Ascending aorta (tissue), 2 donors: ENCODE measurements at regions of chr18 and their contacts with region 1.

Region 1: GRCh38 chr18:63320046-63320689 is 599 bp upstream of the BCL2 start:
- DNase-seq: peak; percentile 66 to 94
- H3K4me3 ChIP-seq: peak overlapping the region; percentile 56 to 68
- H3K27ac ChIP-seq: peak overlapping the region; percentile 87 to 95
- H3K4me1 ChIP-seq: peaks cover 3 to 6% of the 10 kb centered on the region in 2 donors
- H3K27me3 ChIP-seq: no peaks in the 10 kb centered on the region
- CTCF ChIP-seq: peak in 1 of 3 experiments; percentile 31

Region 2: DNA sequence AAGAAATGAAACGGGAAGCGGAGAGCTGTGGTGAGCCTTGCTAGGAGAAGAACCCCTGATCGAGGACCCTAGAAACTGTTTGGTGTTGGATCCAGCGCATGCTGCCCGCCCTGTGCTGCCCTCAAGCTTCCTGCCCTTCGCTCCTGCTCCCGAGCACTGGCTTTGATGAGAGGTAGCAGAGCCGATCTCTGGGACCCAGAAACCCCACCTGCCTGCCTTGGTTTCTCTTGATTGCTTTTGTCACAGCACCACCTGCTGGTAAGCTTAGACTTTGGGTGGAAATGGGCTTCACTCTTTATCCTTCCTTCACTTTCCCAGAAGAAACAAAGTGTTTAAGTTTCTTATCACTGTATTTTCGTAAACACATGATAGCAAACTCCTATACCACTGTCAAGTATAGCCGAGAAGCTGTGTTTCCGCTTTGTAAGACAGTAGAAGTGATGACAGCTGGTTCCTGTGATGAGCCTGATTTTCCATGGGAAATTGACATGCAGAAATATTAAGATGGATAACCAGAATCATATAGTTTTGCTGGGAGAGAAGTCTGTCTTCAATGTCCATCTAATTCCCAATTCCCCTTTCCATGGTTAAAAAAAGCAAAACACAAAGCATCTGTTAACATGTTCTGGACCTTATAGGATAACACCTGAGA is 337.4 kb before region 1 on chr18:
- intact Hi-C with region 1: no loop called
- DNase-seq: no peak
- H3K4me3 ChIP-seq: peak overlapping the region in 1 of 2 donors; percentile 57
- H3K27ac ChIP-seq: no peak overlapping the region
- H3K4me1 ChIP-seq: no peaks in the 10 kb centered on the region
- H3K27me3 ChIP-seq: no peaks in the 10 kb centered on the region
- CTCF ChIP-seq: peak; percentile 65 to 78 (median 68)

Region 3: GRCh38 chr18:63131106-63131958 is 188.8 kb before region 1 on chr18:
- intact Hi-C with region 1: loop called (anchors 1 kb)
- DNase-seq: peak in 1 of 2 donors; percentile 87
- H3K4me3 ChIP-seq: no peak overlapping the region
- H3K27ac ChIP-seq: peak overlapping the region; percentile 56 to 64
- H3K4me1 ChIP-seq: peaks cover 0 to 11% of the 10 kb centered on the region in 2 donors
- H3K27me3 ChIP-seq: no peaks in the 10 kb centered on the region
- CTCF ChIP-seq: peak; percentile 70 to 80 (median 75)

Region 4: DNA sequence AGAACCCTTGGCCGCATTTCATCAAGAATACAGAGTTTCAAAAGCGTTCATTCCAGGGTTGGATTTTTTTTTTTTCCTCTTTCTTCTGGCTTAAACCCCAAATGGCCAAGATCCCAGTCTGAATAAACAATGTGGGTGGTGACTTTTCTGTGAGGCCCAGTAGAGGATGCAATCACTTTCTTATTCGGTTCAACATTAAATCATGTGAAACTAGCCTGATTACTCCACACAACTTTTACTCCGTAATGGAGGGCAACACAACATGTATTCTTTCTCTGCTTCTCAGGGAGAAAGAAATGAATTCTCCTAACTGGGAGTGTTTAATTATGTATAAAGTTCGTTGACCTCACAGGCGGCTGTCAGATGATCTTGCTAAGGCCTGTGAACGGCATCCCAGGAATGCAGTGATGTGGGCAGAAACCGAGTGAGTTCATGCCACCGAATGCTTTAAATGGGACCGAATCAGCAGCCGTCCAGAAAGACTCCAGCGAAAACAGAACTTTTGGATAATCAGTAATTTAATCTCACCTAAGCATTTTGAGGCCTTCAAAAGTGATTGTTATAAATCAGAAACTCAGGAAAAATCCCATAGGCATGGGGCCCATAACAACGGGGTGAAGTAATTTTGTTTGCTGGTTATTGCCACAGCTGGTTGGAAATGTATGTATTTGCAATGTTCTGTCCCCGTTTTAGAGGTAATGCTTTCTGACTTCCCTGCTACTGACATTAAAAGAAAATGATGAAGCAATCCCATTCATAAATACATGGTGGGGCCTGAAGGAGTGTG is 82.1 kb before region 1 on chr18:
- intact Hi-C with region 1: loop called (anchors 2 kb)
- DNase-seq: peak in 1 of 2 donors; percentile 84
- H3K4me3 ChIP-seq: peak overlapping the region; percentile 15 to 18
- H3K27ac ChIP-seq: peak overlapping the region; percentile 91
- H3K4me1 ChIP-seq: peaks cover 0 to 24% of the 10 kb centered on the region in 2 donors
- H3K27me3 ChIP-seq: no peaks in the 10 kb centered on the region
- CTCF ChIP-seq: peak in 1 of 3 experiments; percentile 6

Region 5: GRCh38 chr18:63271881-63272299 is 48.3 kb before region 1 on chr18:
- intact Hi-C with region 1: no loop called
- DNase-seq: no peak
- H3K4me3 ChIP-seq: no peak overlapping the region
- H3K27ac ChIP-seq: no peak overlapping the region
- H3K4me1 ChIP-seq: peaks cover 0 to 2% of the 10 kb centered on the region in 2 donors
- H3K27me3 ChIP-seq: no peaks in the 10 kb centered on the region
- CTCF ChIP-seq: no peak

Region 6: DNA sequence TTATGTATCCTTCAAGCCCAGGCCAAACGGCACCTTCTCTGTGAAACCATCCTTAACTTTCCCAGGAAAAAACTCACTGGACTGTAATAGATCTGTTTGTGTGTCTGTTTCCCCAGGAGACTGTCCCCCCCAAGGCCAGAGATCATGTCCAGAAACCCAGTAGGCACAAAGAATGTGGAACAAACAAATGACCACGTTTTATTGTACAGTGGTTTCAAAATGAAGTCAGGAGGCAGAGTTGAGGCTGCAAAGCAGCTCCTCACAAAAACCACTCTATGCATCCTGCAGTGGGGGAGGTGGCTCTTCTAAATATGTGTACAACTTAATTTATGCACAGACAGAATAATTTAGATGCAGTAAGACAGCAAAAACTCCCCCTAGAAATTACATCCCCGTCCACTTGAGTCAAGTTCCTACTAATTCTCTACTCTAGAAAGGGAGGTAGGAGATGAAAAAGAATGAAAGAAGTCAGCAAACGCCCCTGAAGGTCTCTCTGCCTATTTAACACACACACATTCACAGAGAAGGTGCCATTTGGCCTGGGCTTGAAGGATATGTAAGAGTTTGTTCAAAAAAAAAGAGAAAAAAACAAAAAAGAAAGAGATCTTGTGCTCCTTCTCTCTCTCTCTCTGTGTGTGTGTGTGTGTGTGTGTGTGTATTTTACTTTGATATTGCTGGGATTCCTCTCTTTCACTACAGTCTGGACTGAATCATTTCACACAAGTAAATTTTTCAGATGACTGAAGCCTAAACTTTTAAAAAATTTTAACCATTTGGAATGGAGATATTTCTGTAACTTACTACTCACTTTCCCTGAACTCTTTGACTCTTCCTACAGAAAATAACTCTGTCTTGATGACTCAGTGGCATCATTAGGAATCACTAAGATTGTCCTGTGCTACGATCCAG is 20.1 kb before region 1 on chr18:
- intact Hi-C with region 1: no loop called
- DNase-seq: no peak
- H3K4me3 ChIP-seq: no peak overlapping the region
- H3K27ac ChIP-seq: no peak overlapping the region
- H3K4me1 ChIP-seq: peaks cover 0 to 19% of the 10 kb centered on the region in 2 donors
- H3K27me3 ChIP-seq: no peaks in the 10 kb centered on the region
- CTCF ChIP-seq: no peak

Region 7: DNA sequence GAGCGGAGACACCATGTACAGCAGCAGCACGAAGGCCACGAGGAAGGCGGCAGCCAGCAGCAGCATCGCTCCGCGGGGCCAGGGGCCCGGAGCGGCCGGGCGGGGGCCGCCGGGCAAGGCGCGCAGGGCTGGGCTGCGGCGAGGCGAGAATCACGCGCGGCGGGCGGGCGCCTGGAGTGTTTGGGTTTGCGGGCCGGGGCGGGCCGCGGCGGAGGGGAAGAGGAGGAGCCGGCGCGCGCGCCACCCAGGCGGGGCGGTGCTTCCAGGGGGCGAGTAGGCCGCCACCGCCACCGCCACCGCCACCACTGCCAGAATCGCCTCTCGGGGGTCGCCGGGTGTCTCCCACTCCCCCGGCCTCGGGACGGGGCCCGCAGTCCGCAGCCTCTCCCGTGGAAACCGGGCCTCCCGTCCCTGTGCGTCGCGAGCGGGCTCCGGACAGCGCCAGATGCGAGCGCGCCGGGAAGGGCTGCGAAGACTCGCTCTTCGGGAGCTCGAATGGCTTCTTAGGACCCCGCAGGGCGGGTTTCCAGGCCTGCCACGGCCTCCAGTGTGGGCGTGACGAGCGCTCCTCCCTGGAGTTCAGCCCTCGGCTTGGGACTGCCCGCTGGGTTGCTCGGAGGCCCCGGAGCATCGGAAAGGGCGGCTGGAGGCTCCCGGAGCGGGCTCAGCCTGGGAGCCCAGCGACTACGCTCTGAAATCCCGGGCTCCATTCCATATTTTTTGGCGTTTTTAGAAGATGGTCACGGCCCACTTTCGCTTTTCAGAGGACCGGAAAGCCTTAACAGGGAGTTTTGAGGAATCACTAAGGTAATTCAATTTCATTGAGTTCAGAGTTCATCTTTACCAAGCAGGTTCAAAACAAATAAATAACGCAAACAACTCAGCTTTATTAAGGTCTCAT is 47.1 kb after region 1 on chr18 and contains the start of gene KDSR:
- intact Hi-C with region 1: loop called (anchors 2 kb)
- DNase-seq: peak; percentile 85 to 98
- H3K4me3 ChIP-seq: peak within 1 kb of the TSS; percentile 87 to 92
- H3K27ac ChIP-seq: peak within 1 kb of the TSS; percentile 98
- H3K4me1 ChIP-seq: peaks cover 2 to 19% of the 10 kb centered on the region in 2 donors
- H3K27me3 ChIP-seq: no peaks in the 10 kb centered on the region
- CTCF ChIP-seq: no peak
- total RNA-seq, gene KDSR: 208 TPM